ENCODE measurements at regions of chr5 and their contacts with region 1.

Region 1: GRCh38 chr5:65562731-65563701 is at the starts of genes CENPK and PPWD1:
- DNase-seq: peak; percentile 97
- H3K4me3 ChIP-seq: peak within 1 kb of the TSS; percentile 75 to 91 (median 84)
- H3K27ac ChIP-seq: peak within 1 kb of the TSS; percentile 80 to 88 (median 87)
- H3K4me1 ChIP-seq: peaks cover 0 to 29% (median 22%) of the 10 kb centered on the region in 4 donors
- H3K27me3 ChIP-seq: no peaks in the 10 kb centered on the region
- CTCF ChIP-seq: no peak
- EP300 ChIP-seq: peak in 1 of 4 donors; percentile 20
- POLR2A ChIP-seq: peak; percentile 39 to 65
- total RNA-seq, gene CENPK: 1.4 to 1.8 TPM in 2 of 4 donors, not detected in the others
- total RNA-seq, gene PPWD1: 50.2 to 91.1 (median 78.1) TPM

Region 2: GRCh38 chr5:64768358-64769312 is 794.4 kb before region 1 on chr5 and contains the starts of genes CWC27 and SREK1IP1:
- intact Hi-C with region 1: loop called (anchors 10 kb)
- DNase-seq: peak; percentile 87
- H3K4me3 ChIP-seq: peak within 1 kb of the TSS; percentile 64 to 74 (median 72)
- H3K27ac ChIP-seq: peak within 1 kb of the TSS; percentile 79 to 86 (median 84)
- H3K4me1 ChIP-seq: peaks cover 0 to 41% (median 34%) of the 10 kb centered on the region in 4 donors
- H3K27me3 ChIP-seq: no peaks in the 10 kb centered on the region
- CTCF ChIP-seq: no peak
- EP300 ChIP-seq: no peak
- POLR2A ChIP-seq: peak; percentile 54 to 58
- total RNA-seq, gene CWC27: 18.9 to 27.7 (median 19.7) TPM
- total RNA-seq, gene SREK1IP1: 12.3 to 20.8 (median 14.0) TPM

Region 3: GRCh38 chr5:65624571-65625555 is 61.8 kb after region 1 on chr5 and contains the starts of genes SHLD3 and TRAPPC13:
- intact Hi-C with region 1: loop called (anchors 2 kb)
- DNase-seq: peak; percentile 92
- H3K4me3 ChIP-seq: peak within 1 kb of the TSS; percentile 70 to 90 (median 76)
- H3K27ac ChIP-seq: peak within 1 kb of the TSS; percentile 80 to 92 (median 83)
- H3K4me1 ChIP-seq: peaks cover 0 to 41% (median 34%) of the 10 kb centered on the region in 4 donors
- H3K27me3 ChIP-seq: no peaks in the 10 kb centered on the region
- CTCF ChIP-seq: peak in 1 of 4 experiments; percentile 40
- EP300 ChIP-seq: no peak
- POLR2A ChIP-seq: no peak
- total RNA-seq, gene SHLD3: 2.4 to 3.6 (median 3.3) TPM
- total RNA-seq, gene TRAPPC13: 24.4 to 43.2 (median 30.5) TPM

Region 4: DNA sequence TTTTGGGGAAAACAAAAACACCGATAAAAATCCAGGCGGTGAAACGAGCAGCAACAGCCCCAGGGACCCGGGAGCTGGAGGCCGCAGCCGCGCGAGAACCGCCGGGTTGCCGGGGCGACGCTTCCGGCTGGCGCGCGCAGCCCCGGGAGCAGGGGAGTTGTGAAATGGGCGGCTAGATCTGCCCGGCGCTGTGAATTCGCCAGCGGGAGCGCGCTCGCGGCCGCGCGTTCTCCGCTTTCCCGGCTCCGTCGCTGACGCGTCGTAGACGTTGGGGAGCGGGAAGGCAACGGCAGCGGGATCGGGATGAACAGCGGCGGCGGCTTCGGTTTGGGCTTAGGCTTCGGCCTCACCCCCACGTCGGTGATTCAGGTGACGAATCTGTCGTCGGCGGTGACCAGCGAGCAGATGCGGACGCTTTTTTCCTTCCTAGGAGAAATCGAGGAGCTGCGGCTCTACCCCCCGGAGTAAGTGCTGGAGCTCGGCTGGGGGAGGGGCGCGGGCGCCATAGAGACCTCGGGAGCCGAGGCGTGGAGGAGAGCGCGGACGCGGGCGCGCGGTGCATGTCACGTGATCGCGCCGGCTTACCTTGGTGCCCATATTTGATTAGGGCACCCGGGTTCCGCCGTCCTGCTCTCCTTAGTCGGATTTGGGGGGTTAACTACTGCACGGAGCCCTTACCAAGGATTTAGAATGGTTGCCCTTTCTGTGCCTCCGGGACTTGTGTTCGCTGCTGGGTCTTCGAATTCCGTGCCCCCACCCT is 581.2 kb after region 1 on chr5 and contains the start of gene SREK1:
- intact Hi-C with region 1: loop called (anchors 10 kb)
- DNase-seq: peak; percentile 96
- H3K4me3 ChIP-seq: peak within 1 kb of the TSS; percentile 83 to 90 (median 86)
- H3K27ac ChIP-seq: peak within 1 kb of the TSS; percentile 96 to 99 (median 99)
- H3K4me1 ChIP-seq: peaks cover 0 to 46% (median 28%) of the 10 kb centered on the region in 4 donors
- H3K27me3 ChIP-seq: no peaks in the 10 kb centered on the region
- CTCF ChIP-seq: no peak
- EP300 ChIP-seq: no peak
- POLR2A ChIP-seq: peak; percentile 71 to 75
- total RNA-seq, gene SREK1: 63.5 to 127 (median 85.6) TPM

Measured in sigmoid colon (tissue), 7 donors.